Activated CD4-positive, alpha-beta T cell treated with anti-CD3 and anti-CD28 coated beads, Interleukin-2, amount 10 ng/mL, durations not matched to agents 24 days and 14 days (primary cell): ENCODE measurements at regions of chr10 and their contacts with region 1.

Region 1: GRCh38 chr10:8404391-8405120 is 350.1 kb downstream of the GATA3 start:
- DNase-seq: peak; percentile 92
- H3K4me3 Mint-ChIP-seq: peak overlapping the region; percentile 82
- H3K27ac Mint-ChIP-seq: peak overlapping the region; percentile 87
- H3K4me1 Mint-ChIP-seq: peaks cover 71% of the 10 kb centered on the region
- H3K27me3 Mint-ChIP-seq: no peaks in the 10 kb centered on the region

Region 2: DNA sequence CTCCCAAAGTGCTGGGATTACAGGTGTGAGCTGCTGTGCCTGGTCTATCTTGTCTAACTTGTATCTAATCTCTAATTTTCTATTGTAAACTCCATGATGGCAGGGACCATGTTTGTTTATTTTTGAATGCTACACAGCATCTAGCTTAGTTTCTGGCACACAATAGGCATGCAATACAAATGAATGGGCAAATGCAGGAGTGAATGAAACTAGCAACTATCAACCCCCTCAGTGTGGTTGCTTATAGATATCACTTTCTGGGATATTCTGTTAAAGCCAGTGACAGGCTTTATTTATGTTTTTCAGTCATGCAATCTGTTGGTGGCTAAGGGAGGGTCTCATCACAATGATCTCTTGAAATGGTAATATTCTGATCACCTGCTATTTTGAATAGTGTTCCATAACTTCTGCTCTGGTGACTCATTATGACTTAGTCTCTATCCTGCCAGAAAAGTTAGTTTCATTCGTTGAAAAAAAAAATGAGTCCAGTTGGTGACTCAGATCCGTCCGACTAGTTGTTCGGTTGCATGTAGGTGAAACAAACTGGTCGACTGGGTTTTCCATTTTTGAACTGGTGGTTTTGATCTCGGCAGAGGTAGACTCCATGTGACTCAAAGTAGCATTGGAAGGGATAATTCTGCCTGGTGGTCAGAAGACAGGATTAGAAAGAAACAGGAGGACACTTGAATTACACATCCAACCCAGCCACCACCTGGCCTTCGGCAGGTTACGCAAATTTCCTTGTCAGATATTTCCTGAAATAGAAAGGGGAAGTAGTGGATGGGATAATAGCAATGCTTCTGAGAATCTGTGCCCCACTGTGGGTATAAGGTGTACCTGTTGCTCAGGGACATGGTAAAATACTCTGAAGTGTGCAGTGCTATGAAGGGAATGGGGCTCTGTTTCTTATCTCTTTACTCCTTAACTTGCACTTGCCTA is 273.3 kb before region 1 on chr10:
- intact Hi-C with region 1: loop called (anchors 1 kb)
- DNase-seq: peak; percentile 84
- H3K4me3 Mint-ChIP-seq: peak overlapping the region; percentile 22
- H3K27ac Mint-ChIP-seq: peak overlapping the region; percentile 75
- H3K4me1 Mint-ChIP-seq: peaks cover 46% of the 10 kb centered on the region
- H3K27me3 Mint-ChIP-seq: peaks cover 4% of the 10 kb centered on the region

Region 3: DNA sequence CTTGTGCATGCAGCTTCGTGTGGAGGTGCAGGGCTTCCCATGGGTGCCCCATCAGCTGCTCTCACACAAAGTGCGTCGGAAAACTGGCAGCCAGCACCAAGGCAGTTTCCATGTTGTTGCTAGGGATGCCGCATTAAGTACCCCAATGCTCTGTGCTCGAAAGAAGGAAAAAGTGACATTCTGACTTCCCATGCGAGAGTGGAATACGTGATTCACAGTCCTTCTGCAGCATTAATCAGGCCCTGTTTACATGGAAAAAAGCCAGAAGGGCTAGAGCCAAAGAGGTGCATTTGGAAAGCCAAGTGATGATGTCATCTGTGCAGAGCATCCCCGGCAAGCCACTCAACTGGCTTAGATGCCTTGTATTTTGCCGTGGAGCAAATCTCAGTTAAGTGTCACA is 91.8 kb before region 1 on chr10:
- intact Hi-C with region 1: loop called (anchors 5 kb)
- DNase-seq: no peak
- H3K4me3 Mint-ChIP-seq: no peak overlapping the region
- H3K27ac Mint-ChIP-seq: peak overlapping the region; percentile 64
- H3K4me1 Mint-ChIP-seq: peaks cover 34% of the 10 kb centered on the region
- H3K27me3 Mint-ChIP-seq: no peaks in the 10 kb centered on the region

Region 4: DNA sequence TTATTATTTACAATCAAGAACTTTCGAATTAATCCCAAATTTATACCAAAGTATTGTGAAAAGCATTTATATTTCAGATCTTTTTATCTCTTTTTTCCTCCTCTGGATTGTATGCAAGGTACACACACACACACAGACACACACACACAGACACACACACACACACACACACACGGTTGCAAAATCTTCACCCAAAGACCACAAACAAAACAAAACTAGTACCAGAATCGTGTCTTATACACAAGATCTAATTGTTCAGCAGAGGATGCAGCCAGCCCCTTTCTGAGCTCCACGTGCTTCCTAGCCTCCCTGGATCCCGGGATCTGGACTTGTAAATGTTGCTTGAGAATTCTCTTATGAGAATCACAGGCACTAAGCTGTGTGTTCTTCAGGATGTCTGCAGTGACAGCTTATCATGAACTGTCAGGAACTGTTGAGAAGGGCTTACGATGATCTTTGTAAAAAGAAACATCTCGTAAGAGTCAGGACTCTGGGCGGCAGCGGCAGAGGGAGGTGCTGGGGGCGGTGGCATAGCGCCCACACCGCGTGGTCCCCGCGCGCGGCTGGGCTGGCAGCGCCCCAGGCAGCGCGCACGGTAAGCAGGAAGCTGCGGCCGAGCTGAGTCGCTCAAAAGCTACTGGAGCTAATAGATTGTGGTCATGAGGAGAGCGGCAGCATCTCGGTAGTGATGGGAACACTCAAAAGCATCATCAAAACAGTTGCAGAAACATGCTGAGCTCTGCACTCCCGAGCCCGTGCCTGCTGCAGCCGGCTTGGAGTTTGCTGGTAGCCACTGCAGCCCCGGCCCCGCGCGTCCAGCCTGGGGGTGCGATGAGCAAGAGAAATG is 72.5 kb before region 1 on chr10:
- intact Hi-C with region 1: loop called (anchors 1 kb)
- DNase-seq: peak; percentile 95
- H3K4me3 Mint-ChIP-seq: peak overlapping the region; percentile 76
- H3K27ac Mint-ChIP-seq: peak overlapping the region; percentile 81
- H3K4me1 Mint-ChIP-seq: peaks cover 42% of the 10 kb centered on the region
- H3K27me3 Mint-ChIP-seq: no peaks in the 10 kb centered on the region

Region 5: DNA sequence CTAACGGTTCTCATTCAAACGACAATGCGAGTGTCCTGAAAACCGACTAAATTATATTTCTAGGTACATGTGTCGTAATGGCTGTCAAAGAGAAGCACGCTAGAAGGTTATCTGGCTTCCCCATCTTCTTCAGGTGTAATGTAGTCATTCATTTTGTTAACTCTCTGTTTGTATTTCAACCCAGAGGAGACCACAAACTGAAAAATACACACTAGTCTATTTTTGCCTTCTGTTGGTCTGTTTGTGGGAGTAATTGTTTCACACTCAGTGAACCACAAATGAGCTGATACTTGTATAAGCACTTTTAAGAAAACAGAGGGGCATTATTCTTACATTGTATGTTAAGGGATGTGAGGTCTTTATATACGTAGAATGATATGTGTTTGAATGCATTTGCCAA is 44.2 kb before region 1 on chr10:
- intact Hi-C with region 1: loop called (anchors 1 kb)
- DNase-seq: no peak
- H3K4me3 Mint-ChIP-seq: peak overlapping the region; percentile 13
- H3K27ac Mint-ChIP-seq: peak overlapping the region; percentile 61
- H3K4me1 Mint-ChIP-seq: peaks cover 32% of the 10 kb centered on the region
- H3K27me3 Mint-ChIP-seq: peaks cover 12% of the 10 kb centered on the region

Region 6: DNA sequence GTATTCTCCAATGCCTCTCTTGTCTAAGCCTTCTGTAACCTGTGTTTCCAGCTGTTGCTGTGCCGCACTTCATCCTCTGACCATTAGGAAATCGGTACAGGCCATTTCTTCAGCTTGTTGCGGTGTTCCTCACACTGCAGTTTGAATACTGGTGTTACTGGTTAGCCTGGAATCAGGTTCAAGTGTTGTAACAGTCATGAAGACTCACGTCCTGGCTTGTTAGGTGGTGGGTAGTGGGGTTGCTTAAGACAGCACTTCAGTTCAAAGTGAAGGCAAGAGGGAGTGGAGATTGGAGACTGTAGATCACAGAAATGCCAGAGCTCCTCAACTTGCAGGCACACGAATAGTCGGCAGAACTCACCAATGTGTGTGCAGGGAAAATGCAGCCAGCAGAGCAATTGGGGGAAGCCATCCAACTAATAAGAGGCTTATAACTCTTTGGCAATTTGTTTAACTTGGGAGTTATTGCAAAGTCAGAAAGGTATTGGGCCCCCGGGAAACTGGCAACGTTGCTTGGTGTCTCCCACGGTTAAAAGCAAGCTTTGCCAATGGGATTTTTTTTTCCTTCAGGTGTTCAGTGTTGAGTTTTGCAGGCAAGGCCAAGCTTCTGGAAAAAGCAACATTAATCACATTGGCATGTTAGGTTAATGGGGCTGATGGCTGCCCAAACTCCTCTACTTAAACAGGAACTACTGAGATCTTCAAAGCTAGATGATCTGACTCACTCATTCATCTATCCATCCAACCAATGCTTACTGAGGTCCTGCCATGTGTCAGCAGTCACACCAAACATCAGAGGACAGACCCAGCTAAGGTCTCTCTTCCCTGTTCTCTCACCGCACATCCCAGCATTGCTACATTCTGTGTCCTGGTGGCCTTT is 30.9 kb after region 1 on chr10:
- intact Hi-C with region 1: no loop called
- DNase-seq: no peak
- H3K4me3 Mint-ChIP-seq: no peak overlapping the region
- H3K27ac Mint-ChIP-seq: no peak overlapping the region
- H3K4me1 Mint-ChIP-seq: peaks cover 20% of the 10 kb centered on the region
- H3K27me3 Mint-ChIP-seq: peaks cover 20% of the 10 kb centered on the region

Region 7: DNA sequence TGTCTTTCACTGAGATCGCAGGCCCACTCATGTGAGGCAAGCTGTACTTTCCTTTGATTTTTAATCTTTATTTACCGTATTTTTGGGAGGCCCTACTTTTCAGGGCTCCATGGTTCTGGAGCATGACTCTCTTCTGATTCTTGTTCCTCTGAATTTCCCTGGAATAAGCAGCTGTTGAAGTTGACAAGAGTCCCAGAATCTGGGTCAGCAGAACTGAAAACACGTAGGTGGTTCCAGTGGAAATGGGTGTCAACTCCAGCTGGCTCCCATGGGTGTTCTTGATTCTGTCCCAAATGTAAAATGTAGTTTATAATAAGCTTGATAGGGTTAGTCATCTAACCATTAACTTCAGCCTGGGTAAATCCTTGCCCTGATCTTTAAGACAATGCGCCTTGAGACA is 59.3 kb after region 1 on chr10:
- intact Hi-C with region 1: no loop called
- DNase-seq: no peak
- H3K4me3 Mint-ChIP-seq: no peak overlapping the region
- H3K27ac Mint-ChIP-seq: no peak overlapping the region
- H3K4me1 Mint-ChIP-seq: peaks cover 5% of the 10 kb centered on the region
- H3K27me3 Mint-ChIP-seq: peaks cover 34% of the 10 kb centered on the region

Region 8: GRCh38 chr10:8477300-8477699 is 72.7 kb after region 1 on chr10:
- intact Hi-C with region 1: no loop called
- DNase-seq: no peak
- H3K4me3 Mint-ChIP-seq: no peak overlapping the region
- H3K27ac Mint-ChIP-seq: no peak overlapping the region
- H3K4me1 Mint-ChIP-seq: peaks cover under 1% of the 10 kb centered on the region
- H3K27me3 Mint-ChIP-seq: peaks cover 42% of the 10 kb centered on the region

Region 9: DNA sequence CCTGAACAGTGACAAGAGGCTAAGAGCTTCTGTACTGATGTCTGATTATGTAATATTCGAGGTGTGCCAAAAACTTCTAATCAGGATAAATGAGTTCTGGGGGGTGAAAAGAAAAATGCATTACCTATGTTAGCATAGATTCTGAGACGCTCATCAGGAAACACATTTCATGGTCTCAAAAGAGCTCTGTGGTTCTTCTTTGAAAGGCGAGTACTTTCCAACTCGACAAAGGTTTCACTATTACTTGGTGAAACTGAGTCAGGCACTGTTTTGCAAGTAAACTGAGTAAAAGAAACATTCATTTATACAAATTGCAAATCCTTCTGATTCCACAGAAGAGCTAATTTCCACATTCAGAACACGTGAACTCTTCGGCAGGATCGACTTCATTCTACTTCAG is 173.1 kb after region 1 on chr10:
- intact Hi-C with region 1: loop called (anchors 5 kb)
- DNase-seq: no peak
- H3K4me3 Mint-ChIP-seq: no peak overlapping the region
- H3K27ac Mint-ChIP-seq: peak overlapping the region; percentile 58
- H3K4me1 Mint-ChIP-seq: peaks cover 16% of the 10 kb centered on the region
- H3K27me3 Mint-ChIP-seq: peaks cover 5% of the 10 kb centered on the region

Region 10: DNA sequence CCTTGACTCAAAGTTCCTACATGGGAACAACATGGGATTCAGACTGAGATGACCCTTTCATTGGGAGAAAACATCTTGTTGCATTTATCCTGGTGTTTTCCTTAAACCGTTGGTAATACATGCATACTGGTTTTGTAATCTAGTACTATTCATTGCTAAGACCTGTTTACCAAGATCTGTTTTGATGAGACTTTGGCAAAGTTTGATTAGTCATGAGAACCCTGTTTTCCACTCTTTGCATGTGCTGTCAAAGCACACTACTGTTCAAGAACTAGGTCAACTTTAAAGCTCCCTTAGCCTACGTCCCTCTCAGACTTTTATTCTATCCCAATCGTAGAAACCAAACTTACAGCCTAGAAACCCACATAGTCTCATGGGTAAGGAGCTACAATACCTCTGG is 300.9 kb after region 1 on chr10:
- intact Hi-C with region 1: no loop called
- DNase-seq: no peak
- H3K4me3 Mint-ChIP-seq: no peak overlapping the region
- H3K27ac Mint-ChIP-seq: no peak overlapping the region
- H3K4me1 Mint-ChIP-seq: no peaks in the 10 kb centered on the region
- H3K27me3 Mint-ChIP-seq: peaks cover 2% of the 10 kb centered on the region